Left ventricle myocardium inferior (tissue), 1 donor: ENCODE measurements at regions of chr17 and their contacts with region 1.

Region 1: DNA sequence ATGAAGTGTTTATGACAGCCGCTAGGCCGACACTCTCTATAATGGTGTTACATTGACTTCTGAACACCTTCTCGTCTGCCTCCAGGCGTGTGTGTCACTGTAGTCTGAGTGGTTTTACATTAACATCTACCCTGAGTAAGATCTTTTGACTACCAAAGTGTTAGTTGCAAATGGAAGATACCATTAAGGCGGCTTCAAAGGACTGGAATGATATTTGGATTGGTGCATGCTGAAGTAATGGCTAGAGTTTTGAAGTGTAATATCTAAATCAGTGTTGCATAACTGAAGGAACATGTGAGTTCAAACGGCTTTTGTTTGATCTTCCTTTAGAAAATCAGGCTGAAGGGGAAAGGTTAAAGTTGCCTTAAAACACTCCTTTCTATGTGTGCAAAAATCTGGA is 52.2 kb downstream of the BCAS3 start:
- DNase-seq: no peak
- H3K4me3 ChIP-seq: no peak overlapping the region
- H3K27ac ChIP-seq: no peak overlapping the region
- H3K4me1 ChIP-seq: peaks cover 17% of the 10 kb centered on the region
- H3K27me3 ChIP-seq: no peaks in the 10 kb centered on the region
- CTCF ChIP-seq: no peak

Region 2: DNA sequence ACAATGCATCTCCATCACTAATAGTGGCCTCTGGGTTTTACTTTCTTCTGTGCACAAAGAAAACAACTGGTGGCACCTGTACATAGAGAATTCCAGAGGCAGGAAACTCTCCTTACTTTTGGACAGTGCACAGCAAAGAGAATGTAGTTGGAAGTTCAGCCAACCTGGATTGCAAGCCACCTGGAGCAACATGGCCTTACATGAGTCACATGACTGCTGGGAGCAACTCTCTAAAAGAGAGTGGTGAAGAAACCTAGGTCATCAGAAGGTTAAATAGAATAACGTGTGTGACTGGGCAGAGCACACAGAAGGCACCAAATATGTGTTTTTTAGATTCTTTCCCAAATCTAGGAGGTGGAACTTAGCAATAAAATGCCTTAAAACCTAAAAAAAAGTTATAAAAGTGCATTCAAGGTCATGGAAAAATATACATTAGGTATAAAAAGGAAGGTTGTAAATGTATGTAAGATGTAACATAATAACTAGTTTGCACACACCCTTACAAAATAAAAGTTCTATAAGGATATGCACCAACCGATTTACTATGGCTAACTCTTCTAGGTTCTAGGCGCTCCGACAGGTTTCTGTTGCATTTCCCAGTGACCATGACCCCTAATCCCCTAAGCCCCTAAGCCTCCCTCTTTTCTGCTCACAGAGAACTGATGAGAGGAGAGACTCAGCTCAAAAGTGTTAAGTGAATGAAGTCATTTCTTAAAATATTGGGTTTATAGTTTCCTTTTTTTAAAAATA is 621.4 kb before region 1 on chr17:
- intact Hi-C with region 1: no loop called
- DNase-seq: no peak
- H3K4me3 ChIP-seq: no peak overlapping the region
- H3K27ac ChIP-seq: no peak overlapping the region
- H3K4me1 ChIP-seq: no peaks in the 10 kb centered on the region
- H3K27me3 ChIP-seq: no peaks in the 10 kb centered on the region
- CTCF ChIP-seq: no peak

Region 3: GRCh38 chr17:60493791-60494712 is 235.8 kb before region 1 on chr17:
- intact Hi-C with region 1: no loop called
- DNase-seq: no peak
- H3K4me3 ChIP-seq: no peak overlapping the region
- H3K27ac ChIP-seq: no peak overlapping the region
- H3K4me1 ChIP-seq: no peaks in the 10 kb centered on the region
- H3K27me3 ChIP-seq: no peaks in the 10 kb centered on the region
- CTCF ChIP-seq: no peak

Region 4: DNA sequence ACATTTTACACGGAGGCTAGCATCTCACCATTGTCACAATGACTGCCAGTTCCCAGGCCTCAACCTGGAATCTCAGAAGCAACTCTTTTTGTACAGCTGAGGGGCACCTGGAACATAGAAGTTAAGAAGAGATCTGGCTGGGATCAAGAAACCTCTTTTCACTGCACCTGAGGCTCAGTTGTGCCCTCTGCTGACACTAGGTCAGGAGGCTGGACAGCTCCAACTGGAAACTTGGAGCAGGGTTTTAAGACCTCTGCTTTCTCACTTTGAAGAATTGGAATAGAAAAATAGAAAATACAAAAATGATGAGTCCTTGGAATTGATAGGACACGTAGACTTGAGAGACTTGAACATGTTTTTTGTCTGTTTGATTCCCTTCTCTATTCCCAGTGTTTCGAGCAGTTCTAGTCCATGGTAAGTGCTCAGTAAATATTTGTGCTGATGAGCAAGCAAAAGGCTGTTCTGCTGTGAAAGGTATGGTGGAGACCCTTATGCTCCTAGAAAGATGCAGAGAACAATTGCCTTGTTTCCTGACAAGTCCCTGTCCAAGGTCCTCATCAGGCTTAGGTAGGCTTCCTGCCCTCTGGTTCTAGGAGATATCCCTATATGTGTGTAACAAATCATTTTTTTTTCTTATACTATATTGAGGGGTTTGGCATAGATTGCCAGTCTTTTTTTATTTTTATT is 143.4 kb before region 1 on chr17:
- intact Hi-C with region 1: no loop called
- DNase-seq: no peak
- H3K4me3 ChIP-seq: no peak overlapping the region
- H3K27ac ChIP-seq: no peak overlapping the region
- H3K4me1 ChIP-seq: no peaks in the 10 kb centered on the region
- H3K27me3 ChIP-seq: no peaks in the 10 kb centered on the region
- CTCF ChIP-seq: peak; percentile 43

Region 5: DNA sequence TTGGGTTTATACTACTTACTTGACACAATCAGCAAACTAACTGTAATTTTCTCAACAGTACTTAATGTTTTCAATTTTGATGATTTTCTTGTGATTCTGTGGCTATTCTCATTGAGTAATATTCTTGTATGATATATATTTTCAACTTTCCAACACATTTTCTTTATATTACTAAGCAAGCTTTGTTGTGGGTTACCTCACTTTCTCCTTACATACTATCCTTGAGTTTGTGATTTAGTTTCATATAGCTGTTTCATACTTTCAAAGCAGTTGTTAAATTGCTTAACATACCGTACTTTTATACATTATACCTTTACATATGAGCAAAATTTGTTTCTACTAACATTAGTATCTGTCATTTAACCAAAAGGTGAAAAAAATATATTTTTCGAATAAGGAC is 144.9 kb after region 1 on chr17:
- intact Hi-C with region 1: loop called (anchors 5 kb)
- DNase-seq: no peak
- H3K4me3 ChIP-seq: no peak overlapping the region
- H3K27ac ChIP-seq: no peak overlapping the region
- H3K4me1 ChIP-seq: no peaks in the 10 kb centered on the region
- H3K27me3 ChIP-seq: no peaks in the 10 kb centered on the region
- CTCF ChIP-seq: no peak